HepG2 (cell line): ENCODE measurements at regions of chr12 and their contacts with region 1.

Region 1: GRCh38 chr12:119052001-119052400 is 70.7 kb downstream of the SRRM4 start:
- DNase-seq: no peak
- ATAC-seq: no peak
- H3K4me3 ChIP-seq: no peak overlapping the region
- H3K27ac ChIP-seq: no peak overlapping the region
- H3K4me1 ChIP-seq: no peaks in the 10 kb centered on the region
- H3K27me3 ChIP-seq: no peaks in the 10 kb centered on the region
- CTCF ChIP-seq: no peak
- EP300 ChIP-seq: no peak
- POLR2A ChIP-seq: no peak
- RAD21 ChIP-seq: no peak

Region 2: GRCh38 chr12:119008691-119009221 is 43.2 kb before region 1 on chr12:
- CTCF ChIA-PET with region 1: no interaction called
- POLR2A ChIA-PET with region 1: no interaction called
- in situ Hi-C with region 1: no loop called
- intact Hi-C with region 1: no loop called
- DNase-seq: no peak
- ATAC-seq: no peak
- H3K4me3 ChIP-seq: no peak overlapping the region
- H3K27ac ChIP-seq: no peak overlapping the region
- H3K4me1 ChIP-seq: no peaks in the 10 kb centered on the region
- H3K27me3 ChIP-seq: no peaks in the 10 kb centered on the region
- CTCF ChIP-seq: no peak
- EP300 ChIP-seq: no peak
- POLR2A ChIP-seq: no peak
- RAD21 ChIP-seq: no peak

Region 3: GRCh38 chr12:119019166-119019565 is 32.8 kb before region 1 on chr12:
- CTCF ChIA-PET with region 1: no interaction called
- POLR2A ChIA-PET with region 1: no interaction called
- in situ Hi-C with region 1: no loop called
- intact Hi-C with region 1: no loop called
- DNase-seq: no peak
- ATAC-seq: no peak
- H3K4me3 ChIP-seq: no peak overlapping the region
- H3K27ac ChIP-seq: no peak overlapping the region
- H3K4me1 ChIP-seq: no peaks in the 10 kb centered on the region
- H3K27me3 ChIP-seq: peaks cover 0 to 3% of the 10 kb centered on the region in 2 experiments; a peak in 1 of 5 replicates
- CTCF ChIP-seq: no peak
- EP300 ChIP-seq: no peak
- POLR2A ChIP-seq: no peak
- RAD21 ChIP-seq: no peak

Region 4: GRCh38 chr12:119036878-119037825 is 14.8 kb before region 1 on chr12:
- CTCF ChIA-PET with region 1: no interaction called
- POLR2A ChIA-PET with region 1: no interaction called
- in situ Hi-C with region 1: no loop called
- intact Hi-C with region 1: no loop called
- DNase-seq: peak; percentile 16
- ATAC-seq: no peak
- H3K4me3 ChIP-seq: no peak overlapping the region
- H3K27ac ChIP-seq: no peak overlapping the region
- H3K4me1 ChIP-seq: no peaks in the 10 kb centered on the region
- H3K27me3 ChIP-seq: no peaks in the 10 kb centered on the region
- CTCF ChIP-seq: peak; percentile 67
- EP300 ChIP-seq: no peak
- POLR2A ChIP-seq: no peak
- RAD21 ChIP-seq: no peak

Region 5: DNA sequence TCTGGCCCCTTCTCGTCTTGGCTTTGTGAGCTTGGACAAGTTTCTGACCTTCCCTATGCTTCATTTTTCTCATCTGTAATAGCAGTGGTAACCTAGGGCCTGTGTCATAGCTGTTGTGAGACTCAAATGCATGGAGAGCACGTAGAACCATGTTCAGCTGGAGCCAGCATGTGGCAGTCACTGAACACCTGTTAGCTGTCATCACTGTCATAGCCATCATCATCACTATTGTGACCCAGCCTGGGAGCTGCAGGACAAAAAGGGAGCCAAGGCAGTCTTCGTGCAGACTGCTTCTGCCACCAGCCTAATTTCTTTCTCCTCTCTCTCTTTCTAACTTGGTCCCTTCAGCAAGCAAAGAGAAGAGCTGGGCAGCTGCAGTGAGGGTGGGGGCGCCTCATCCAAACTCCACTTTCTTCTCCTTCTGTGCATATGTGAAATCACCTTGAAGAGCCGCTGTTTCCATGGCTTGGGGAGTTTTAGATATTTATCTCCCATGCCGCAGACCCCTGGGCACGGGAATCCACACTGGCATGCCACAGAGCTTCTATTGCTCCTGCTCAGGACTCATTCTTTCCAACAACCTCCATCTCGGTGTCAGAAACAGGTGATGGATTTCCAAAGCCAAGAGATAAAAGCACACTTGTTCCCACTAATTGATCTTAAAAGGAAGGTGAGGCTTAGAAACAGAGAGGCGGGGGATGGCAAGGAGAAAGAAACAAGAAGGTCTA is 16.3 kb after region 1 on chr12:
- CTCF ChIA-PET with region 1: no interaction called
- POLR2A ChIA-PET with region 1: no interaction called
- in situ Hi-C with region 1: no loop called
- intact Hi-C with region 1: no loop called
- DNase-seq: no peak
- ATAC-seq: no peak
- H3K4me3 ChIP-seq: no peak overlapping the region
- H3K27ac ChIP-seq: no peak overlapping the region
- H3K4me1 ChIP-seq: no peaks in the 10 kb centered on the region
- H3K27me3 ChIP-seq: peaks cover 0 to 3% of the 10 kb centered on the region in 2 experiments; a peak in 1 of 5 replicates
- CTCF ChIP-seq: no peak
- EP300 ChIP-seq: no peak
- POLR2A ChIP-seq: no peak
- RAD21 ChIP-seq: no peak

Region 6: GRCh38 chr12:119274636-119275065 is 222.7 kb after region 1 on chr12:
- CTCF ChIA-PET with region 1: no interaction called
- POLR2A ChIA-PET with region 1: no interaction called
- in situ Hi-C with region 1: no loop called
- intact Hi-C with region 1: loop called (anchors 5 kb)
- DNase-seq: no peak
- ATAC-seq: no peak
- H3K4me3 ChIP-seq: no peak overlapping the region
- H3K27ac ChIP-seq: no peak overlapping the region
- H3K4me1 ChIP-seq: no peaks in the 10 kb centered on the region
- H3K27me3 ChIP-seq: no peaks in the 10 kb centered on the region
- CTCF ChIP-seq: no peak
- EP300 ChIP-seq: no peak
- POLR2A ChIP-seq: no peak
- RAD21 ChIP-seq: no peak